Right ventricle myocardium inferior (tissue), 1 donor: ENCODE measurements at regions of chr7 and their contacts with region 1.

Region 1: DNA sequence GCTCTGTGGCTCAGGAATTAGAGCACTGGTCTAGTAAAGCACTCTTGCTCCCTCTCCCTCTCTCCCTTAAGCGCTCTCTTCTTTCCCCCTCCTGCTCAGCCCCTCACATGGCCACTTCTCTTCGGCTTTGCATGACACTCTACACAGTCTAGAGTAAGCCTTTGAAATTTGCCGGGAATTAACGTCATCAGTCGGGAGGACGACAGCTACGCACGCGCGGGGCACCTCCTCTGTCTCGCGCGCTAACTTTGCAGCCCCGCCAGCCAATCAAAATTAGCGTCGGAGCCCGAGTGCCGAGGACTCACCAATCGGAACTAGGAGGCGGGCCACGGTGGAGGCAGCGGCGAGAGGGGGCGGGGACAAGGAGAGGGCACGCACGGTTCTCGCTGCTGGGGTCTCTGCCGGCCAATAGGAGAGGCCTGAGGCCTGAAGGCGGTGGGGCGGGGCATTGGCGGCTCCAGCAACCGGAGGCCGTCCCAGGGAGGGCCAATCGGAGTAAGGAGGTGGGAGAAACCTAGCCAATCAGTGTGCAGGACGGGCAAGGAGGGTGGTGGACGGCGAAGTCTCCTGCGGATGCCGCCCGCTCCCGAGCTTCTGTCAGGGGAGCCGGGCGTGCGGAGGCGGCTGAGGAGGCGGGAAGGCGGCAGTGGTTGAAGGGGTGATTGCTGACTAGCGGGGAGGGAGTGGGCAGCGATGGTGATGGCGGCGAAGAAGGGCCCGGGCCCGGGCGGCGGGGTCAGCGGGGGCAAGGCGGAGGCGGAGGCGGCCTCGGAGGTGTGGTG is at the start of gene AGFG2:
- DNase-seq: peak; percentile 100
- ATAC-seq: peak; percentile 100
- total RNA-seq, gene AGFG2: 21.5 TPM

Region 2: GRCh38 chr7:100478966-100479665 is 59.7 kb before region 1 on chr7 and contains the start of gene TSC22D4:
- intact Hi-C with region 1: loop called (anchors 2 kb)
- DNase-seq: peak; percentile 97
- ATAC-seq: peak; percentile 92
- total RNA-seq, gene TSC22D4: 50.3 TPM